ENCODE measurements at regions of chr5 and their contacts with region 1.

Region 1: DNA sequence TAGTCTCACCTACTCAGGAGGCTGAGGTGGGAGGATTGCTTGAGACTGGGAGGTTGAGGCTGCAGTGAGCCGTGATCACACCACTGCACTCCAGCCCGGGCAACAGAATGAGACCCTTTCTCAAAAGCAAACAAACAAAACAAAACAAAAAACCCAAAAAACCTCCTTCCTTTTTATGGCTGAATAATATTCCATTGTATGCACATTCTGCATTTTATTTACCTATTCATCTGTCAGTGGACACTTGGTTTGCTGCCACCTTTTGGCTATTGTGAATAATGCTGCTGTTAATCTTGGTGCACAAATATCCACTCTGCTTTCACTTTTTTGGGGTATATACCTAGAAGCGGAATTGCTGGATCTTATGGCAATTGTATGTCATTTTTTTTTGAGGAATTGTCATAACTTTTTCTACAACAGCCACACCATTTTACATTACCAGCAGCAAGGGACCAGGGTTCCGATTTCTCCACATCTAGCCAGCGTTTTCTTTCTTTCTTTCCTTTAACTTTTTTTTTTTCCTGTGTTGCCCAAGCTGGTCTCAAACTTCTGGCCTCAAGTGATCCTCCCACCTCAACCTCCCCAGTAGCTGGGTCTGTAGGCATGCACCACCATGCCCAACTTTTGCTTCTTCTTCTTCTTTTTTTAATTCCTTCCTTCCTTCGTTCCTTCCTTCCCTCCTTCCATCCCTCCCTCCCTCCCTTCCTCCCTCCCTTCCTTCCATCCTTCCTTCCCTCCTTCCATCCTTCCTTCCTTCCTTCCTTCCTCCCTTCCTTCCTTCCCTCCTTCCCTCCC is 30.6 kb downstream of the NKX2-5 start:
- DNase-seq: no peak
- ATAC-seq: no peak
- H3K4me3 ChIP-seq: no peak overlapping the region
- H3K27ac ChIP-seq: no peak overlapping the region
- H3K4me1 ChIP-seq: no peaks in the 10 kb centered on the region
- H3K27me3 ChIP-seq: peaks cover 0 to 27% (median 15%) of the 10 kb centered on the region in 7 donors
- CTCF ChIP-seq: peak; percentile 9 to 66 (median 48)

Region 2: DNA sequence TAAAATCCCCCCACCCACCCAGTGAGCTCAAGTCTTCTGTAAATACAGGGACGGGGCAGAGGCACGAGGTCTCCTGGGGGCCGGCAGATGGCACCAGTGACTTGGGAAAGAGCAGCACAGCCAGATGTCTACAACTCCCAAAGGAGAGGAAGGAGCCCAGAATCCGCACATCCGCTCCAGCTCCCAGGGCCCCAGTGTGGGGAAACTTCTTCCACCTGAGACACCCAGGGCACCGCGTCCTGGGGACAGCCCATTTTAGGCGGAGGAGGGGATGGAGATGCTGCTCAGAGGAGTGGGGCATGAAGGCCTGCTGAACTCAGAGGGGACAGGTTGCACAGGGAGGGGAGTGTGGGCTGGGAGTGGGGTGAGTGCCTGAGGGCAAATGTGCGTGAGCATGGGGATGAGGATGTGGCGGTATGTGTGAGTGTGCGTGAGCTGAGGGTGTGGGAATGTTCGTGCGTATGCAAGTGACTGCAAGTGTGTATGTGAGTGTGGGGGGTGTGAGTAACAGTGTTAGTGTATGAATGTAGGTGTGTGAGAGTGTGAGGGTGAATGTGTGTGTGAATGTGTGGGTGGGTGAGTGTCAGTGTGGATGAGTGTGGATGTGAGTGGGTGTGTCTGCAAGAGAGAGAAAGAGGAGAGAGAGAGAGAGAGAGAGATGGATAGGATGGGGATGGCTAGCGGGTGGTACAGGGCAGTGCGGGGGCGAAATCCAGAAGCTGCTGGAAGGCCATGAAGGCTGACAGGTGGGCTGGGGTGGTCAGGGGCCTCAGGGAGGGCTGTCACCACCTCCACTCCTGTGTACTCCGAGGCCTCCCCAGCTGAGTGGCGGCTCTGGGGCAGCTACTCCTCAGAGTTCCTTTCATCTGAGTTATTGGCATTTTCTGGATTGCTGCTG is 496.8 kb before region 1 on chr5:
- intact Hi-C with region 1: loop called in 1 of 10 experiments (anchors 5 kb)
- DNase-seq: no peak
- ATAC-seq: peak; percentile 43 to 82 (median 66)
- H3K4me3 ChIP-seq: no peak overlapping the region
- H3K27ac ChIP-seq: no peak overlapping the region
- H3K4me1 ChIP-seq: peaks cover 0 to 4% (median 0%) of the 10 kb centered on the region in 9 donors
- H3K27me3 ChIP-seq: peaks cover 0 to 18% (median 0%) of the 10 kb centered on the region in 7 donors
- CTCF ChIP-seq: peak; percentile 11 to 60 (median 48)

Region 3: DNA sequence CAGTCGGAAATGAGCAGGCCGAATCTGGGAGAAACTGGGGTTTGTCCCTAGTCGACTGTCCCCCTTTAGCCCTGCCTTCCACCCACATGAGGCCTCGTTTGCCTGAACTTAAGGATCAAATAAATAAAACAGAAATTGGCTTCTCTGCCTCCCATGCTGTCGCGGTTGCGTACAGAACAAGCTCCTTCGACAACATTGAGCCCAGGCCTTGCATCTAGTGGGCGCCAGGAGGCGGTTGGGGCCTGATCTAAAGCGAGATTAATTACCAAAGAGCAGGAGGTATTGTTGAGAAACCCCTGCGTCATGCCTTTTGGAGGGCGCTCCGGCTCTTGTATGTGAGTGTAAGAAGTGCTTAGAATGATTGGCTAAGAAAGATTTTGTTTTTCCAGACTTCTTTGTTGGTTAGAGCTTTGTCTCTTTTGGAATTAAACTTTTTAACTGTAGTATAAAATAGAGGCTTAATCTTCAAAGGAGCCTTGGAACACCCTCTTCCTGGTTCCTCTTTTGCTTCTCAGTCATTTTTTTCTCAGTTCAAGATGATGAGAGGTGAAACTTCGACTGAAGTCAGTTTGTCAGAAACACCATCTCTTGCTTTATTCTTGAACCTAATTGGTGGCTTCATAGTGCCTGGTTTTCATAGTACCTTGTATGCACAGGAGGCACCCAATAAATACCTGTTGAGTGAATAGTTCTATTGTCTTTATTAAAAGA is 220.0 kb before region 1 on chr5:
- intact Hi-C with region 1: loop called in 2 of 10 experiments (anchors 5 to 10 kb)
- DNase-seq: peak; percentile 46 to 50
- ATAC-seq: peak; percentile 50 to 77 (median 66)
- H3K4me3 ChIP-seq: peak overlapping the region; percentile 65 to 95 (median 88)
- H3K27ac ChIP-seq: peak overlapping the region; percentile 86 to 95 (median 92)
- H3K4me1 ChIP-seq: peaks cover 0 to 43% (median 17%) of the 10 kb centered on the region in 9 donors
- H3K27me3 ChIP-seq: no peaks in the 10 kb centered on the region
- CTCF ChIP-seq: peak in 8 of 9 donors; percentile 18 to 56 (median 35)

Region 4: GRCh38 chr5:173035904-173036707 is 168.3 kb before region 1 on chr5:
- intact Hi-C with region 1: no loop called
- DNase-seq: no peak
- ATAC-seq: no peak
- H3K4me3 ChIP-seq: peak overlapping the region in 2 of 10 donors; percentile 22 to 28
- H3K27ac ChIP-seq: peak overlapping the region in 9 of 10 donors; percentile 4 to 87 (median 62)
- H3K4me1 ChIP-seq: peaks cover 0 to 39% (median 16%) of the 10 kb centered on the region in 9 donors
- H3K27me3 ChIP-seq: no peaks in the 10 kb centered on the region
- CTCF ChIP-seq: no peak

Measured in heart right ventricle (tissue), 16 donors.